Activated naive CD8-positive, alpha-beta T cell treated with anti-CD3 and anti-CD28 coated beads, Interleukin-2, amount 10 ng/mL, durations not matched to agents 7 days and 5 days (primary cell): ENCODE measurements at regions of chr19 and their contacts with region 1.

Region 1: GRCh38 chr19:43754503-43755255 is at the start of gene SMG9:
- DNase-seq: peak; percentile 99
- ATAC-seq: peak; percentile 85
- H3K4me3 Mint-ChIP-seq: peak within 1 kb of the TSS; percentile 99
- H3K27ac Mint-ChIP-seq: peak within 1 kb of the TSS; percentile 100
- H3K4me1 Mint-ChIP-seq: peaks cover 41% of the 10 kb centered on the region
- H3K27me3 Mint-ChIP-seq: no peaks in the 10 kb centered on the region
- total RNA-seq, gene SMG9: 48.9 to 49.9 TPM

Region 2: GRCh38 chr19:43555185-43555770 is 199.4 kb before region 1 on chr19:
- POLR2A ChIA-PET with region 1: no interaction called
- DNase-seq: peak; percentile 80
- ATAC-seq: peak; percentile 97
- H3K4me3 Mint-ChIP-seq: no peak overlapping the region
- H3K27ac Mint-ChIP-seq: peak overlapping the region; percentile 44
- H3K4me1 Mint-ChIP-seq: peaks cover 5% of the 10 kb centered on the region
- H3K27me3 Mint-ChIP-seq: no peaks in the 10 kb centered on the region

Region 3: GRCh38 chr19:43668406-43669158 is 86.1 kb before region 1 on chr19:
- POLR2A ChIA-PET with region 1: interaction called, 30 read pairs
- DNase-seq: peak; percentile 94
- ATAC-seq: peak; percentile 86
- H3K4me3 Mint-ChIP-seq: peak overlapping the region; percentile 94
- H3K27ac Mint-ChIP-seq: peak overlapping the region; percentile 91
- H3K4me1 Mint-ChIP-seq: peaks cover 33% of the 10 kb centered on the region
- H3K27me3 Mint-ChIP-seq: peaks cover 3% of the 10 kb centered on the region

Region 4: GRCh38 chr19:43726736-43727592 is 27.7 kb before region 1 on chr19:
- POLR2A ChIA-PET with region 1: no interaction called
- DNase-seq: no peak
- ATAC-seq: no peak
- H3K4me3 Mint-ChIP-seq: no peak overlapping the region
- H3K27ac Mint-ChIP-seq: peak overlapping the region; percentile 49
- H3K4me1 Mint-ChIP-seq: peaks cover 10% of the 10 kb centered on the region
- H3K27me3 Mint-ChIP-seq: no peaks in the 10 kb centered on the region

Region 5: DNA sequence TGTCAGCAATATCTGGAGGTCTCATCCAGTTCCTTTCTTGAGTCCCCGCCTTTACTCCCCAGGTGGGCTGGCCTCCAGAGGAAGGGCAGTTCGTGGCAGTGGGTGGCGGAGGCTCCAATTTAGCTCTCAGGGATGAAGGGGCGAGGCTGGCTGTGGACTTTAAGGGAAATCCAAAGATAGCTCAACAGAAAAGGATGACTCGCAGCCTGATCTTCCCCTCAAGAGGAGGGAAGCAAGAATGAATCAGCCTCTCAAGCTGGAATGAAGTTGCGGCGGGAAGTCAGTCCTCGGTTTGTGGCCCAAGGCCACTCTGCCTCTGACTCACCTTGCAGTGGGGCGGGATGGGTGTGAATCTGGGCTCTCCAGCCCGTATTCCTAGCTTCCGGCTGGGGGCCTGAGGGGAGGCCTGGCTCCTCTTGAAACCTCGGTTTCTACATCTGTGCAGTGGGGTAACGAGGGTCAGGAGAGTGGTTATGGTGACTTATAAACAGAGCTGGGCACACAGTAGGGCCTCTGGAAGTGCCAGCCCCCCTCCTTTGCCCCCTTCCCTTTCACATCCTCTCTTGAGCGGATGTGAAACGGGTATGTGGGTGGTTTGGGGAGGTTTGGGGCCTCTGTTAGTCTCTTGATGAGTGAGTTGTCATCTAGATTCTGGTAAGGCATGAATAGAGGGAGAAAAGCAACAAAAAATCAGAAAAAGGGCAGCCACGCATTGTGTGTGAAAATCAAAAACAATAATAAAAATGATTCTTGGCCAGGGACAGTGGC is 10.6 kb after region 1 on chr19:
- POLR2A ChIA-PET with region 1: interaction called, 111 read pairs
- DNase-seq: peak; percentile 75
- ATAC-seq: peak; percentile 76
- H3K4me3 Mint-ChIP-seq: peak overlapping the region; percentile 58
- H3K27ac Mint-ChIP-seq: peak overlapping the region; percentile 89
- H3K4me1 Mint-ChIP-seq: peaks cover 31% of the 10 kb centered on the region
- H3K27me3 Mint-ChIP-seq: no peaks in the 10 kb centered on the region

Region 6: DNA sequence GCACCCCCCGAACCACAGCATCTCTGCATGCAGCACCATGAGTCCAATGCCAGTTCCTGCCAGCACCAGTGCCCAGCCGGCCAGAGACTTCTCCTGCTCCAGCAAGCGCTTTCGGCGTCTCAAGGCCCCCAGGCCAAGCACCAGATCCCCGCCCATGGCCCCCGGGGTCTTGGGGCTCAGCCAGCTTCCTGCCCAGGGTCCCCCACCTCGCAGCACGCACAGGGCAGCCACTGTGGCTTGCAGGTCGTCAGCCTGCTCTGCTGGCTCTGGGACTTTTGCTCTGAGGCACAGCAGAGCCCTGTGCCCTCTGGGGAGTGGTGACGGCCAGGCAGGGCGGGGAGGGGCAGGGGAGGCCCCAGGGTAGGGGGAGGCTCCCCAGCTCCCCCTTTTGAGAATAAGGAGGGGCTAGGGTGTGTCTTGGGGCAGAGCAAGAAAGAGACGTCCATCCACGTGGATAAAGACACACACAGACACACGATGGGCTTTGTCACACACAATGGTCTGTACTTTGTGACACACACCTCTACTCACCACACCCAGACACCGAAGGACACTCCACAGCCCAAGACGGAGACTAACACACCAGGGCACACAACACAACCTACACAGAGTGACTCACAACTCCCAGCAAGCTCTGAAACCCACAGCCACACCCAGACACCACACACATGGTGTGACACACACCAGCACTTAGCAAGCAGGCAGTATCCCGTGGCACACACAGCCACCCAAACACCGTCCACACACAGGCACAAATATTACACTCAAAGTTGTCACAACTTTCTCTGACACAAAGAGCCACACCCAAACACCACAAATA is 26.2 kb after region 1 on chr19 and contains the start of gene KCNN4:
- POLR2A ChIA-PET with region 1: interaction called, 67 read pairs
- DNase-seq: peak; percentile 72
- ATAC-seq: peak; percentile 67
- H3K4me3 Mint-ChIP-seq: peak within 1 kb of the TSS; percentile 84
- H3K27ac Mint-ChIP-seq: peak within 1 kb of the TSS; percentile 84
- H3K4me1 Mint-ChIP-seq: peaks cover 62% of the 10 kb centered on the region
- H3K27me3 Mint-ChIP-seq: no peaks in the 10 kb centered on the region
- total RNA-seq, gene KCNN4: 38.3 to 45.4 TPM

Region 7: GRCh38 chr19:43820098-43820883 is 65.6 kb after region 1 on chr19:
- POLR2A ChIA-PET with region 1: no interaction called
- DNase-seq: no peak
- ATAC-seq: no peak
- H3K4me3 Mint-ChIP-seq: peak overlapping the region; percentile 77
- H3K27ac Mint-ChIP-seq: peak overlapping the region; percentile 21
- H3K4me1 Mint-ChIP-seq: peaks cover 10% of the 10 kb centered on the region
- H3K27me3 Mint-ChIP-seq: peaks cover 23% of the 10 kb centered on the region

Region 8: GRCh38 chr19:43839139-43839538 is 84.5 kb after region 1 on chr19:
- POLR2A ChIA-PET with region 1: no interaction called
- DNase-seq: no peak
- ATAC-seq: no peak
- H3K4me3 Mint-ChIP-seq: no peak overlapping the region
- H3K27ac Mint-ChIP-seq: no peak overlapping the region
- H3K4me1 Mint-ChIP-seq: no peaks in the 10 kb centered on the region
- H3K27me3 Mint-ChIP-seq: no peaks in the 10 kb centered on the region